ENCODE measurements at regions of chr2 and their contacts with region 1.

Region 1: DNA sequence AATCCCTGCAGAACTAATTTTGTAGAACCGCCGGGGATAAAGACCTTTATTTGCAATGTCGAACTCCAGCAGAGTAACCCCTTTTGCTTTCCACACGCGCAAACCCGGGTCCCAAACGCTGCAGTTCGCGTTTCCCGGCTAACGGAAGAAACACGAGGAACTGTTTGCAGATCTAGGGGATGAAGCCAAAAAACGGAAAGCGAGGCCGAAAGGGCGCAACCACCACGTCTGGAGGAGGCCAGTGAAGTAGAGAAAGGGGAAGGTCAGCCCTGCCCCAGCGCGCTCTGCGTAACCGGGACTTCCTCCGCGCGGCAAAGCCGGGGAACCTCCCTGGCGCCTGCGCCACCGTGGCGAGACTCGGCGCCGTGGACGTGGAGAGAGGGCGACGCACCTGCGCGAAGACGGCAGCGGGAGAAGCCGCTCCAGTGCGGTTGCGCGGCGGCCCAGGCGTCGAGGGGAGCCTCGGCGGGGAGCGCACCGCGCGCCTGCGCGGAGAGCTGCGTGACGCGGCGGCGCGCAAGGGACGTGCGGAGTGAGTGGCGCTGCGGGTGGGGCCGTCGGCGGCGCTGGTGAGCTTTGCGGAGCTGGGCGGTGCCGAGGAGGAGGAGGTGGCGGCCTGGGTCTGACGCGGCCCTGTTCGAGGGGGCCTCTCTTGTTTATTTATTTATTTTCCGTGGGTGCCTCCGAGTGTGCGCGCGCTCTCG is at the start of gene PPP1CB:
- DNase-seq: peak; percentile 84 to 96
- H3K4me3 ChIP-seq: peak within 1 kb of the TSS; percentile 93
- H3K27ac ChIP-seq: peak within 1 kb of the TSS; percentile 90
- H3K4me1 ChIP-seq: peaks cover 43% of the 10 kb centered on the region
- H3K27me3 ChIP-seq: no peaks in the 10 kb centered on the region
- CTCF ChIP-seq: no peak; the same call in 1 of the 2 replicates
- total RNA-seq, gene PPP1CB: 231 and 260 TPM in 2 replicates

Region 2: GRCh38 chr2:27703638-27704341 is 1047.6 kb before region 1 on chr2:
- CTCF ChIA-PET with region 1: no interaction called
- POLR2A ChIA-PET with region 1: no interaction called
- intact Hi-C with region 1: loop called (anchors 10 kb)
- DNase-seq: peak; percentile 73 to 80
- H3K4me3 ChIP-seq: no peak overlapping the region
- H3K27ac ChIP-seq: peak overlapping the region; percentile 98
- H3K4me1 ChIP-seq: peaks cover 53% of the 10 kb centered on the region
- H3K27me3 ChIP-seq: no peaks in the 10 kb centered on the region
- CTCF ChIP-seq: peak; percentile 95

Region 3: DNA sequence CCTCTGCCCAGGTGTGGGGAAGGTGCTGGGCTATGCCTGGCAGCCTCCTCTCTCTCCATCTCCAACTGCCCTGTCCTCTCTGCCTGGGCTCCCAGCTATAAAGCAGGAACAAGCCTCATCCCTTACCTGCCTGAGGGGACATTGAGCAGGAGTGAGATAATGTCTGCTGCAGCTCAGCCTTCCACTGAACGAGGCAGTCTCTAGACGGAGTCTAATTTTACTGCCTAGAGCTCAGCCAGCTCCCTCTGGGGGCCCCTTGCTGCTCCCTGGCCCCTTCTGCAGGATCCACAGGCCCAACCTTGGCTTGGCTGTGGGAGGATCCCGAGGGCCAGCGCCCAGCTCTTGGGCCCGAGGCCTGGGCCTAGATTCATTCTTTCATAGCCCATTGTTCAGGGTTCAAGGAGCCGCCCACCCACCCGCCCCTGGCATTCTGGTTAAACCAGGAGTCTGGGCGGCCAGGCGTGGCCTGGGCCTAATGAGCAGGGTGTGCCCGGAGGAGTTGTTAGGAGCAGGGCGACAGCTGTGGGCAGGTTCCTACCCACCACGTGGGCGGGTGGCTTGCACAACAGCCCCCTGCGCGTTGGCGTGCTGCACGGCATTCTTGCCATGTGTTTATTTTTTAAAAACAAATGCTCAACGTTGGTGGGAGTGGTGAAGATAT is 314.1 kb before region 1 on chr2:
- CTCF ChIA-PET with region 1: no interaction called
- POLR2A ChIA-PET with region 1: no interaction called
- intact Hi-C with region 1: loop called (anchors 10 kb)
- DNase-seq: peak; percentile 82 to 90
- H3K4me3 ChIP-seq: peak overlapping the region; percentile 27; the same call in 1 of the 2 replicates
- H3K27ac ChIP-seq: peak overlapping the region; percentile 93
- H3K4me1 ChIP-seq: peaks cover 39% of the 10 kb centered on the region
- H3K27me3 ChIP-seq: no peaks in the 10 kb centered on the region
- CTCF ChIP-seq: no peak

Region 4: GRCh38 chr2:28610583-28611201 is 140.7 kb before region 1 on chr2:
- CTCF ChIA-PET with region 1: interaction called, 10 read pairs
- POLR2A ChIA-PET with region 1: no interaction called
- intact Hi-C with region 1: loop called (anchors 1 kb)
- DNase-seq: peak; percentile 91 to 99
- H3K4me3 ChIP-seq: no peak overlapping the region
- H3K27ac ChIP-seq: peak overlapping the region; percentile 83
- H3K4me1 ChIP-seq: peaks cover 59% of the 10 kb centered on the region
- H3K27me3 ChIP-seq: no peaks in the 10 kb centered on the region
- CTCF ChIP-seq: no peak

Region 5: DNA sequence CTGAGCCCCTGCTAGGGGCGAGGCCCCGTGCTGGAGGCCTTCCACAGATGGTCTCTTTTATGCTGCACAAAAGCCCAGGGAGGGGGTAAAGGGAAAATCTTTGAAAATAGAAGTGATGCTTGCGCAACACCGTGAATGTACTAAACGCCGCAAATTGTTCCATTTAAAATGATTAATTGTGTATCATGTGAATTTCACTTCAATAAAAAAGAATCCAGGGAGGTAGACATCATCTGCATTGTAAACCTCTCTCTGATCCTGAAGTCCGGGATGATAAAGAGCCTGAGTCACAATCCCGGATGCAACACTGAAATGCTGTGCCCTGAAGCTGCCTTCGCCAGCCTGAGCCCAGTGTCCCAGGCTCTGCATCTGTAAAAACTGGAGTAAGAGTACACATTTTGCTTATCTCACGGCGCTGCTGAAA is 107.5 kb before region 1 on chr2:
- CTCF ChIA-PET with region 1: no interaction called
- POLR2A ChIA-PET with region 1: interaction called, 7 read pairs
- intact Hi-C with region 1: loop called (anchors 1 kb)
- DNase-seq: peak; percentile 48 to 92
- H3K4me3 ChIP-seq: peak overlapping the region; percentile 24; the same call in 1 of the 2 replicates
- H3K27ac ChIP-seq: peak overlapping the region; percentile 90
- H3K4me1 ChIP-seq: peaks cover 71% of the 10 kb centered on the region
- H3K27me3 ChIP-seq: no peaks in the 10 kb centered on the region
- CTCF ChIP-seq: no peak

Region 6: DNA sequence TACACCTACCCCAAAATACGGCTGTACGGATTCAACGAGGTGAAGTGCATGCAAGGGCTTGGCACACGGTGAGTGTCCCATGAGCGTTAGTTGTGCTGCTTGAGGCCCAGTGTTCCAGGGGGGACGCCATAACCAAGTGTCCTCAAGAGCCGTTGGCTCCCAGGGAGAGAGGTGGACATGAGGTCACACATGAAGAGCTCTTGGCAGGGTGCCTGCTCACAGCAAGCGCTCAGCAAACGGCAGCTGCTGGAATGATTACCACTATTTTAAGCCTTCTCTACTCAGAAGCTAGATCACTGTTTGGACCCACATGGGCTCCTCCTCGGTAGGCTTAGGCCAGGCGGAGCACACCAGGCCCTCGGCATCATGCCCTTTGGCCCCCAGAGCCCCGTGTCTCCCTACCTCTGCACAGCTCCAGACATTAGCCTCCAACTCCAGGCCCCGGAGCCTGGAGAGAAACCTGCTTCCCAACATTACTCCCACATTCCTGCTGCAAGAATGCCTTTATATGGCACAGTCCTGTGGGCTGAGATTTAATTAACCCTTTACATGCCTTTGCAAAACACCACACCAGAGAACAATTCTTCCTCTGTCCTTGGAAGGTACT is 68.2 kb before region 1 on chr2:
- CTCF ChIA-PET with region 1: no interaction called
- POLR2A ChIA-PET with region 1: interaction called, 5 read pairs
- intact Hi-C with region 1: loop called (anchors 1 kb)
- DNase-seq: peak; percentile 77 to 84
- H3K4me3 ChIP-seq: no peak overlapping the region
- H3K27ac ChIP-seq: 0 out of 2 replicates have a peak overlapping the region, but pooled peaks have one; percentile 2
- H3K4me1 ChIP-seq: peaks cover 35% of the 10 kb centered on the region
- H3K27me3 ChIP-seq: no peaks in the 10 kb centered on the region
- CTCF ChIP-seq: no peak

Region 7: GRCh38 chr2:28695245-28695647 is 56.2 kb before region 1 on chr2:
- CTCF ChIA-PET with region 1: no interaction called
- POLR2A ChIA-PET with region 1: no interaction called
- intact Hi-C with region 1: no loop called
- DNase-seq: no peak
- H3K4me3 ChIP-seq: no peak overlapping the region
- H3K27ac ChIP-seq: no peak overlapping the region
- H3K4me1 ChIP-seq: peaks cover 8% of the 10 kb centered on the region
- H3K27me3 ChIP-seq: no peaks in the 10 kb centered on the region
- CTCF ChIP-seq: no peak

Region 8: DNA sequence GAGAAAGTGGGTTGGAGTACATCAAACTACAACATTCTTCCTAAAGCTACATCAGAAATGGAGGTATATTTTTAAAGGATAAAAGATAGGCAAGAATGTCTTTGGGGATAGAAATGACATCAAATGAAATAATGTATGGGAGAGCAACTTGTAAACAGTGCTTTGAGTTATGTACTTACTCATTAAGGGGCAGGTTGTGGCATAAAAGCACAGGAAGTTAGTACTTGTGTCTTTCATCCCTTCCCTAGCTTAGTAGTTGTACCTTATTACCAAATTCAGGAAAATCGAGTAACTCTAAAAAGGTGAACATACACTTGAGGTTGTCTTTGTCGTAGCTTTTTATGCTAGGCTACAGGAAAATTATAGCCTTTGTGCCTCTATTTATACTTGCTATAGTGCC is 29.1 kb after region 1 on chr2:
- CTCF ChIA-PET with region 1: no interaction called
- POLR2A ChIA-PET with region 1: no interaction called
- intact Hi-C with region 1: no loop called
- DNase-seq: no peak
- H3K4me3 ChIP-seq: no peak overlapping the region
- H3K27ac ChIP-seq: no peak overlapping the region
- H3K4me1 ChIP-seq: no peaks in the 10 kb centered on the region
- H3K27me3 ChIP-seq: no peaks in the 10 kb centered on the region
- CTCF ChIP-seq: no peak

Region 9: DNA sequence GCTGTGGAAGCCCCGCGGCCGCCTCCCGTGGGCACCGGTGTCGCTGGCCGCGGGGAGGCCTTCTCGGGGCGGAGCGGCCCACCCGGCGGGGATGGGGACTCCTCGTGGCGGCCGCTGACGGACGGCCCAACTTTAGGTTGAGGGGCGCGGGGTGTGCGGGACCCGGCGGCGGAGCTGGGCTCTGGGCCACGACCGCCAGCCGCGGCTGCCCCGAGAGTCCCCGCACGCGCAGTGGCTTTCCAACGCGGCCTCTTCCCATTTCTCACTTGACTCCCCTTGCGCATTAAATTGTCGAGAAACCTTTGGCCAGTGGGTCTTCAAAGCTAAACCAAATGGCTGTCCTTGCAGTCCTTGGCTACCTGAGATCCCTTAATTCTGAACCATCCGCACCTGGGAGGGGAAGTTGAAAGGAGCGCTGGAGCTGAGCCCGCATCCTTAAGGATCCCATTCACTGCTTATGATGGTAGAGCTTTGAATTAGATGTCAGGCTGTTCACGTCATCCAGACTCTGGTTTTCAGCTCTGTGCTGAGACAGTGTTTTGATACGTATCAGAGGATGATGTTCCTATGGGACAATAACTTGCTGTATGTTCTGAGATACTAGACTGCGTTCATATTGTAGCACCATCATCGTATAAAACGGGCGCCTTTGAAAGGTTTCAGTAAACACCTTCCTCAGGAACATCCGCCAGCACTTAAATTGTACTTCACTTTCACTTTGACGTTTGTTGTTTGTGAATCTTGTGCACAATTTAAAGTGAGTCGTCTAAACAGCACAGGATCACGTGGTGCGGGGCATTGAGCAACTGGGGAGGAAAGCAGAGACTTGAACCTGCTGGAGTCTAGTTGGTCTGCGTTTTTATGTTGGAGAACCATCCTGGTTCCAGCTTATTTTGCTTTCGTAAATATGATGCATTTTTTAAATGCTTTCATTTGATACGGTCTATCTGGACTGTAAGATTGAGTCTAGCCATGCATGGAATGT is 364.7 kb after region 1 on chr2:
- CTCF ChIA-PET with region 1: no interaction called
- POLR2A ChIA-PET with region 1: interaction called, 10 read pairs
- intact Hi-C with region 1: no loop called
- DNase-seq: peak; percentile 58 to 71
- H3K4me3 ChIP-seq: peak overlapping the region; percentile 90
- H3K27ac ChIP-seq: peak overlapping the region; percentile 97
- H3K4me1 ChIP-seq: peaks cover 70% of the 10 kb centered on the region
- H3K27me3 ChIP-seq: no peaks in the 10 kb centered on the region
- CTCF ChIP-seq: no peak

Measured in PC-9 (cell line).